Spleen (tissue), 13 donors: ENCODE measurements at regions of chr5 and their contacts with region 1.

Region 1: GRCh38 chr5:178859625-178860531 is at the start of gene ZNF354B:
- DNase-seq: peak; percentile 96
- H3K4me3 ChIP-seq: peak within 1 kb of the TSS; percentile 86 to 98 (median 92)
- H3K27ac ChIP-seq: peak within 1 kb of the TSS; percentile 68 to 88 (median 85)
- H3K4me1 ChIP-seq: peaks cover 0 to 37% (median 21%) of the 10 kb centered on the region in 6 donors
- H3K27me3 ChIP-seq: peaks cover 0 to 8% (median 0%) of the 10 kb centered on the region in 7 donors
- CTCF ChIP-seq: peak in 7 of 11 experiments; percentile 15 to 50 (median 26)
- POLR2A ChIP-seq: peak in 1 of 3 donors; percentile 14
- total RNA-seq, gene ZNF354B: 12.6 to 26.2 (median 19.9) TPM

Region 2: DNA sequence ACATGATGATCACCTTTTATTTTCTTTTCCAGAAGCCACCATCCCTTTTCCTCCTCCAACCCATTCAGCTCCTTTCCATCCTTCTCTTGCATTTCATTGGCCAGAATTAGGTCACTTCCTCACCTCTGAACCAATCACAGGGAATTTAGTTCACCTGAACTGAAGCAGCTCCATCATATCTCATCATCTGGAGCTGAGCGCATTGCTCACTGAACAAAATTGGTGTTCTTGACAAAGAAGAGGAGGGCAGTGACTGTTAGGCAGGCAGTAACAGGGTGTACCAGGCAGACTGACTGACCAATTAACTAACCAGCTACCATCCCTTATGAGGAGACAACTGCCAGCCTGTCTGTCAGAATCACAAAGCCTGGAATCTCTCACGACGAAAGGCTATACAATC is 127.6 kb before region 1 on chr5:
- intact Hi-C with region 1: loop called (anchors 10 kb)
- DNase-seq: no peak
- H3K4me3 ChIP-seq: no peak overlapping the region
- H3K27ac ChIP-seq: peak overlapping the region in 2 of 8 donors; percentile 92 to 95
- H3K4me1 ChIP-seq: peaks cover 0 to 20% (median 9%) of the 10 kb centered on the region in 6 donors
- H3K27me3 ChIP-seq: no peaks in the 10 kb centered on the region
- CTCF ChIP-seq: no peak
- POLR2A ChIP-seq: no peak